OCI-LY7 (cell line): ENCODE measurements at regions of chr1 and their contacts with region 1.

Region 1: DNA sequence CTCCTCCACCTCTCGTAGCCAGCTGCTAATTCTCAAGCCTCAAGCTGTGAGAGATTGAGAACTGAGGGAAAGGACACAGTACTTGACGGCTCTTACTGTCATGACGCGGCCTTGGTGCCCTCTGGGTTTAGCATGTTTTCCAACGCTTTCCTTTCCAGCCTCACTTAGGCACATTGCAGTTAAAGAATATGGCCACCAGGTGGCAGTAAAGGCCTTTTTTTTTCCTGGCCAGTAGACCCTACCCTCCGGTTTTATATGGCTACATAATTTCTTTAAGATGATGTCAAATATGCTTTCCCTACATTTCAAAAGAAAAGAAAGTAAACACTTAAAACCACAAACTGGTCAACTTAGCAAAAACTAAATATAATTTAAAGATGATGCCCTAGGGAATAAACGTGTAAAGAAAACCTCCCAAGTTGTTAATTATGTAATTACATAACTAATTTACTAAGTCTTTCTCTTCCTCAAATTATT is 56.8 kb upstream of the PRDX6 start:
- DNase-seq: peak; percentile 79
- H3K4me3 ChIP-seq: no peak overlapping the region
- H3K27ac ChIP-seq: peak overlapping the region; percentile 42
- H3K4me1 ChIP-seq: peaks cover 50% of the 10 kb centered on the region
- CTCF ChIP-seq: peak; percentile 92

Region 2: GRCh38 chr1:172818841-172819527 is 601.4 kb before region 1 on chr1:
- CTCF ChIA-PET with region 1: no interaction called
- POLR2A ChIA-PET with region 1: interaction called, 3 read pairs
- intact Hi-C with region 1: loop called (anchors 2 kb)
- DNase-seq: peak; percentile 91
- H3K4me3 ChIP-seq: peak overlapping the region; percentile 59
- H3K27ac ChIP-seq: peak overlapping the region; percentile 88
- H3K4me1 ChIP-seq: peaks cover 53% of the 10 kb centered on the region
- CTCF ChIP-seq: no peak

Region 3: DNA sequence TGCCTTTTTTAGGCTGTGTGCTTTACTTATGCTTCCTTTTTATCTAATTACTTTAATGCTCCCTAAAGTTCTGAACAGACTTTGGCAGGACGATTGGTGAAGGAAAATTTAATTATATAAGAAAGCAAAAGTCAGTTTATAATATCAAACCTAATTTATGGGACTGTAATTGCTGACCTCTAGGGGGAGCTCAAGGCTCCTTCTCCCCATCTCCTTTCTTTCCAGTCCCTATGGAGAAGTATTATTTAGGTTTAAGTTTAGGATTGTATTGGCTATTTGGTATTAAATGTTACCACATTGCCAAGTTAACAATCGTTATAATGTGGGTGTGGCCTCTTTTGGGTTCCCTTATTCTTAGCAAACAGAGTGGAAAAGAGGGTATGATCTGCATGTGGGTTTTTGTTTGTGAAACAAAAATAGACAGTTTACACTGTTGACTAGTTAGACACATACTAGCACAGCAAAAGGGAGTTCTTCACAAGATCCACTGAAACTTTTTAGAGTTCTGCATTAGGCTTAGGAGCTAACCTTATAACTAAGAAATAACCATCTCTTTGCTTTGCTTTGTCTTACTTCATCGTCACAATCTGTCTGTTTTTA is 165.1 kb before region 1 on chr1:
- CTCF ChIA-PET with region 1: interaction called, 3 read pairs
- POLR2A ChIA-PET with region 1: interaction called, 3 read pairs
- intact Hi-C with region 1: loop called (anchors 2 kb)
- DNase-seq: peak; percentile 54
- H3K4me3 ChIP-seq: no peak overlapping the region
- H3K27ac ChIP-seq: no peak overlapping the region
- H3K4me1 ChIP-seq: peaks cover 21% of the 10 kb centered on the region
- CTCF ChIP-seq: peak; percentile 99

Region 4: DNA sequence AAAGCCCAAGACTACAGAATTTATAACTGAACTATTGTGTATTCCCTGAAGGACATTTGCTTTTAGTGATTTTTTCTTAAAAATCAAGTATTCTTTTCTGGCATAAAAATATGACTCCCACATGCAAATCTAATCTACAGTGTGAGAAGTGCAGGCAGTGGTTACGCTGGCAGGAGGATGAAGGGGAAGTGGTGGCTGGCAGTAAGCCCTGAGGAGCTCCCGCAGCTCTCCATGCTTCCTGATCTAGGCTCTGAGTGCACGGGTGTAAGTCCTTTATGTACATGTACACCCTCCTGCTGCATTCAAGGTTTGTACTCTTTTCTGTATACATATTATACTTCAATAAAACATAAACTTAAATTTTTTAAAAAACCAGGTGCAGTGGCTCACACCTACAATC is 10.8 kb before region 1 on chr1:
- CTCF ChIA-PET with region 1: no interaction called
- POLR2A ChIA-PET with region 1: interaction called, 22 read pairs
- intact Hi-C with region 1: no loop called
- DNase-seq: peak; percentile 76
- H3K4me3 ChIP-seq: peak overlapping the region; percentile 41
- H3K27ac ChIP-seq: peak overlapping the region; percentile 96
- H3K4me1 ChIP-seq: peaks cover 100% of the 10 kb centered on the region
- CTCF ChIP-seq: no peak

Region 5: GRCh38 chr1:173444757-173445156 is 24.4 kb after region 1 on chr1:
- CTCF ChIA-PET with region 1: no interaction called
- POLR2A ChIA-PET with region 1: no interaction called
- intact Hi-C with region 1: no loop called
- DNase-seq: peak; percentile 30
- H3K4me3 ChIP-seq: no peak overlapping the region
- H3K27ac ChIP-seq: no peak overlapping the region
- H3K4me1 ChIP-seq: peaks cover 13% of the 10 kb centered on the region
- CTCF ChIP-seq: no peak

Region 6: DNA sequence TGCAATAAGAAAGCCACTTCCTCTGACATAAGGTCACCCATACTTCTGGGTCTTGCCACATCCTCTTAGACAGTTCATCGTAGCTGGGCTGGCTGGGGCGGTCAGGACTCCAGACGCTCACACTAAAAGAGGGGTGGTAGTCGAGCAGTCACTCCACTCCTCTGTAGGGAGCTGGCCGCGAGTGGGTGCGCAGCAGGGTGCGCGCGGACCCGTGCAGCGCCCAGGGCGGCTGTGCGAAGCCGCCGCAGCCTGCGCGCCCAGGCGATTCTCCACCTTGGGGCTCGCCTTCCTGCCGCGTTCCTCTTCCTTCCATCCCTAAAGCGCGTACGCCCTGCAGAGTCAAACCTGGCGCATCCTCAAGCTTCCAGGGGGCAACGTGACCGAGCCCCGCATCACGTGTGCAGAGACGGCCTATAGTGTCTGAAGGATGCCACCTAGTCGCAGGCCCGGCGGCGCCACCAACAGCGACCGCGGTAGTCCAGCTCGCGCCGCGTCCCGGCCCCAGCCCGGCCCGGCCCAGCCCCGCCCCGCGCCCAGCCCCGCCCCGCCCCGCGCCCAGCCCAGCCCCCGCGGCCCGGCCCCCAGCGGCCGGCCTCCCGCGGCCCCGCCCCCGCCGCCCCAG is 56.4 kb after region 1 on chr1:
- CTCF ChIA-PET with region 1: no interaction called
- POLR2A ChIA-PET with region 1: interaction called, 4 read pairs
- intact Hi-C with region 1: loop called (anchors 1 kb)
- DNase-seq: peak; percentile 95
- H3K4me3 ChIP-seq: peak overlapping the region; percentile 99
- H3K27ac ChIP-seq: peak overlapping the region; percentile 63
- H3K4me1 ChIP-seq: peaks cover 30% of the 10 kb centered on the region
- CTCF ChIP-seq: no peak

Region 7: DNA sequence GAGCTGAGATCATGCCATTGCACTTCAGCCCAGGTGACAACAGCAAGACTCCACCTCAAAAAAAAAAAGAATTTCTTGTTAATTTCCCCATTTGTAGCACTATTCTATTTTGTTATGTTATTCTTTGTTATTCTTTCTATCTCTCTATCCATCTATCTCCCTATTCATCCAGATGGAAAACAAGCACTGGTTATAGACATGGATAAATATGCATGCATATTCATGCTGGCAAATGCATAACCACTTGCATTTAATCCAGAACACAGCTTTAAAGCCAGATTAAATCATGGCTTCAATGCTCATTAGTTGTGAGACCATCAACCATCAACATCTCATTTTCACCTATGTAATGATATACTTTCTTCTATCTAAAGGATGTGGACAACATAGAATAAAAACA is 272.9 kb after region 1 on chr1:
- CTCF ChIA-PET with region 1: no interaction called
- POLR2A ChIA-PET with region 1: no interaction called
- intact Hi-C with region 1: loop called (anchors 5 kb)
- DNase-seq: no peak
- H3K4me3 ChIP-seq: no peak overlapping the region
- H3K27ac ChIP-seq: no peak overlapping the region
- H3K4me1 ChIP-seq: no peaks in the 10 kb centered on the region
- CTCF ChIP-seq: no peak

Region 8: GRCh38 chr1:174159252-174160108 is 739.1 kb after region 1 on chr1 and contains the start of gene RABGAP1L:
- CTCF ChIA-PET with region 1: no interaction called
- POLR2A ChIA-PET with region 1: no interaction called
- intact Hi-C with region 1: loop called (anchors 5 kb)
- DNase-seq: peak; percentile 96
- H3K4me3 ChIP-seq: peak within 1 kb of the TSS; percentile 96
- H3K27ac ChIP-seq: peak within 1 kb of the TSS; percentile 82
- H3K4me1 ChIP-seq: peaks cover 46% of the 10 kb centered on the region
- CTCF ChIP-seq: 0 out of 2 replicates have a peak, but pooled peaks have one; percentile 9
- total RNA-seq, gene RABGAP1L: 98.1 and 142 TPM in 2 replicates